ENCODE measurements at regions of chr9 and their contacts with region 1.

Region 1: DNA sequence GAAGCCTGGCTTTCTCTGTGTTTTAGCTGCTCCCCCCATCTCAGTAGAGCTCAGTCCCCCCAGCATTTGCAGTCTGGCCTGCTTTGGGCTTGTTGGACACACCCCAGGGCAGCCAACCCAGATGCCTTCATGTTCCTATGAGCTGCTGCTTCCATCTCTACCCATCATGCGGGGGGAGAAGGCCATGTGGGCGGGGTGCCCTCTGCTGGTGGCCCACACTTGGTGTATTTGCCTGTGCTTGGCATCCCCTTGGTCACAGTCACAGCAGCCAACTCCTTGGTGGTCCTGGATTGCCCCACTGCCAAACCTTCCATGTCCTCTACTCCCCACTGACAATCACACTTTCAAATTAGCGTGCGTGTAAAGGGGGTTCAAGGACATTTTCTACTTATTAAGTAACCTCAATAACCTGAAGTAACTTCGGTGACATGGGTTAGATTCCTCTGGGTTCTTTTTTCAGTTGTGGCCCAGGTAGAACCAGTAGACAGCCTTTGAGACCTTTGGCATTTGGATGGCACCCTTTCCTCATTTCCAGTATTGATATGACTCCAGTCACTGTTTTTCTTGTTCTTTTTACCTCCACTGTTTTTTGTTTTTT is 42.8 kb downstream of the SNX30 start:
- DNase-seq: peak; percentile 92
- ATAC-seq: peak; percentile 99
- H3K4me3 Mint-ChIP-seq: no peak overlapping the region
- H3K27ac Mint-ChIP-seq: no peak overlapping the region
- H3K4me1 Mint-ChIP-seq: peaks cover 5% of the 10 kb centered on the region
- H3K27me3 Mint-ChIP-seq: no peaks in the 10 kb centered on the region

Region 2: DNA sequence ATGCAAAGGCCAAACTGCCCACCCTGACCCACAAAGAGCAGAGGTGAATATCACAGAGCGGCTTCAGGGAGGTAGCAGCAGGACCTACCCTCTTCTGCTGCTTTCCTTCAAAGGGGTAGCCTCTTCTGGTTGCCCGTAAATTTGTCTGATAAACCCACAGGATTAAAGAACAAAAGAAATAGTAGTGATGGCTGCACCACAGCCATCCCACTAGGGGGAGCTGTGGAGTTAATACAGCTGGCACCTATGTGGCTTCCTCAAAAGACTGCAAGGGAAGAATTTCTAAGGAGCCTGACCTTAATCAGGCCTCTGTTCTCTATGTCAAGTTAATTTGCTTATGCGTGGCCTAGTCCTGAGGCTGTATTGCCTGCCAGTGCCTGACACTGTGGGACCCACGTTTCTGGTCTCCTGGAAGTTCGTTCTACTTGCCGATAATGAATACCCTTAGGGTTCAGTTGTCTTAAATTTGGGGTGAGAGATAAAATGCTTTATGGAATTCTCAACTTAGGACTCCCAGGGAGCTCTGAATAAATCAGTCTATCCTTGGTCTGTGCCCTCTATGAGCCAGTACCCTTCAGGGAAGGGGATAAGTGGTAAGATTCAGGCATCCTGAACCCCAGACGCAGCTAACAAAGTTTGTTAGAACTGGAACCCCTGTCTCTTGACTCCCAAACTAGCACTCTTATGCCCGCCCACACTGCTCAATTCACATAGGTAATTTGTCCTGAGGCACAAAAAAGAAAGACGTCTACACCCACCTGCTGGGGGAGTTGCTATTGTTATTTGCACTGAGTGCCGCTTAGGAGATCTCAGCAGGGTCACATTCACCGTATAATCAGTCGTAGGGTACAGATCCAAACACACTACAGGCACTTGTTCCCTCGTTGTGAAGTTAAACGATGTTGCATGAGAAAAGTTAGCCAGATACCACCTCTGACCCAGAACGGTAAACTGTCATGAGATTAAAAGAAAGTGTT is 695.3 kb before region 1 on chr9:
- CTCF ChIA-PET with region 1: no interaction called
- POLR2A ChIA-PET with region 1: no interaction called
- intact Hi-C with region 1: loop called (anchors 10 kb)
- DNase-seq: peak; percentile 82
- ATAC-seq: peak; percentile 90
- H3K4me3 Mint-ChIP-seq: no peak overlapping the region
- H3K27ac Mint-ChIP-seq: no peak overlapping the region
- H3K4me1 Mint-ChIP-seq: peaks cover 13% of the 10 kb centered on the region
- H3K27me3 Mint-ChIP-seq: no peaks in the 10 kb centered on the region

Region 3: DNA sequence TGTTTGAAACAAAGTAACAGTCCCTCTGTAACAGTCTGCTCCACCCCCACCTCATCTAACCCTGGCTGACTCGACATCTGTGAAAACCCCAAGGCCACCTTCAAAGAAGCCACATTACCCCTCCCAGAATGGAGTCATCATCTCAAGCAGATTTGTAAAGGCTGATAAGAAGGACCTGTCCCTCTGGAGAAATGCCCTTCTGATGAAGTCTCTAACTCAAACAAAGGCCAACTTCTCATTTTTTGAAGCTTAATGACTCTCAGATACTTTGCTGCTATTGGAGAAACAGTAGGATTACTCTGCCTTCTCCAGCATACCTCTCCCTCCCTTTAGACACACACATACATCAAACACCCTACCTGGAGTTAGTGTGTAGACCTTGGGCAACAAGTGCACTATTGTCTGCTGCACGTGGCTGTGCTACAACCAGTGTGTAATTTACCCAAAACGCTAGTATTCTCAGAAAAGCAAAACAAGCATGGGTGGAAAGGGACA is 612.9 kb before region 1 on chr9:
- CTCF ChIA-PET with region 1: no interaction called
- POLR2A ChIA-PET with region 1: no interaction called
- intact Hi-C with region 1: no loop called
- DNase-seq: peak; percentile 74
- ATAC-seq: peak; percentile 87
- H3K4me3 Mint-ChIP-seq: peak overlapping the region; percentile 18
- H3K27ac Mint-ChIP-seq: peak overlapping the region; percentile 5
- H3K4me1 Mint-ChIP-seq: peaks cover 30% of the 10 kb centered on the region
- H3K27me3 Mint-ChIP-seq: peaks cover 14% of the 10 kb centered on the region

Region 4: DNA sequence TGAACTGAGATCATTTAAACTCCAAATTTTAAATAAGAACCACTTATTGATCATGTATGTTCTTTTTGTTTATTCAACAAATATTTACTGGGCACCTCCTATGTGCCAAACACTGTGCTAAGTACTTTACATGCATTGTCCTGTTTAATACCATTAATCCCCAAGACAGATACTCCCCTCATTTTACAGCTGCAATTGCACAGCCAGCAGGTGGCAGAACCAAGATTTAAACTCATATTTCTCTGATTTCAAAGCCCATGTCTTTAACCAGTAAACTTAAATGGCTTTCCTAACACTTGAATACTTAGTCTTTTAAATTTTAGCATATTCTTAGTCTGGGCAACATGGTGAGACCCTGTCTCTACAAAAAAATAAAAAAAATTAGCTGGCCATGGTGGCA is 350.1 kb before region 1 on chr9:
- CTCF ChIA-PET with region 1: interaction called, 3 read pairs
- POLR2A ChIA-PET with region 1: no interaction called
- intact Hi-C with region 1: loop called (anchors 5 kb)
- DNase-seq: peak; percentile 33
- ATAC-seq: no peak
- H3K4me3 Mint-ChIP-seq: no peak overlapping the region
- H3K27ac Mint-ChIP-seq: no peak overlapping the region
- H3K4me1 Mint-ChIP-seq: no peaks in the 10 kb centered on the region
- H3K27me3 Mint-ChIP-seq: no peaks in the 10 kb centered on the region

Region 5: GRCh38 chr9:112694706-112695555 is 98.4 kb before region 1 on chr9:
- CTCF ChIA-PET with region 1: interaction called, 11 read pairs
- POLR2A ChIA-PET with region 1: no interaction called
- intact Hi-C with region 1: no loop called
- DNase-seq: no peak
- ATAC-seq: no peak
- H3K4me3 Mint-ChIP-seq: no peak overlapping the region
- H3K27ac Mint-ChIP-seq: no peak overlapping the region
- H3K4me1 Mint-ChIP-seq: peaks cover 16% of the 10 kb centered on the region
- H3K27me3 Mint-ChIP-seq: no peaks in the 10 kb centered on the region

Region 6: DNA sequence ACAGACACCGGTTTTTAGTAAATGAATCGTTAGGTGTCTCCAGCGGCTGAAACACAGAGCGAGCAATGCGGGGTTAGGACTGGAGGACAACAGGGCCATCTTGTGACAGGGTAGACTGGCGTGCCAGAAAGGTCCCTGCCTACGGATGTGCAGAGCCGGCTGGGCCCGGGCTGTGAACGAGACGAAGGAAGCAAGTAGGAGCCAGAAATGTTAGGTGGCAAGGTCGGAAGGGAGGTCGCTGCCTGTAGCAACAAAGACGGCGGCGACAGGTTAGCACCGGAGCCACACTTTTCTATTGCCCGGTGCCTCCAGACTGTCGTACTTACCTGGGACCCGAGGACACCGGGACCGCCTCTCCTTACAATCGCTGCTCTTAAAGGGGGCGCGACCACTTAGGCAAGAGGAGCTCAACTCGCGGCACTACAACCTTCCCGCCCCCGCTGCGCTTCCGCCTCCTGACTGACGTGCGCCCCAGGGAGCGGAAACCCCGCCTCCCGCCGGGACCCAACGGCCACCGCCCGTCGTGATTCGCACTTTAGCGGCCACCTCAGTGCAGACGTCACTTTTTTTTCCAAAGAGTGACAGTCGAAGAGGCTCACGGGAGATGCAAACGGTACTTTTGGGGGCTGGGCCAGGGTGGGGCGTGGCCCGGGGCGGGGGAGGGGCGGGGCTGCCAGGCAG is 75.5 kb before region 1 on chr9 and contains the start of gene INIP:
- CTCF ChIA-PET with region 1: interaction called, 8 read pairs
- POLR2A ChIA-PET with region 1: interaction called, 4 read pairs
- intact Hi-C with region 1: loop called (anchors 1 to 5 kb)
- DNase-seq: peak; percentile 99
- ATAC-seq: peak; percentile 93
- H3K4me3 Mint-ChIP-seq: peak within 1 kb of the TSS; percentile 89
- H3K27ac Mint-ChIP-seq: peak within 1 kb of the TSS; percentile 97
- H3K4me1 Mint-ChIP-seq: peaks cover 35% of the 10 kb centered on the region
- H3K27me3 Mint-ChIP-seq: no peaks in the 10 kb centered on the region
- total RNA-seq, gene INIP: 37.3 to 37.7 TPM

Region 7: GRCh38 chr9:112743216-112743836 is 50.0 kb before region 1 on chr9:
- CTCF ChIA-PET with region 1: interaction called, 3 read pairs
- POLR2A ChIA-PET with region 1: no interaction called
- intact Hi-C with region 1: loop called in 1 of 2 experiments (anchors 10 kb)
- DNase-seq: no peak
- ATAC-seq: no peak
- H3K4me3 Mint-ChIP-seq: no peak overlapping the region
- H3K27ac Mint-ChIP-seq: no peak overlapping the region
- H3K4me1 Mint-ChIP-seq: peaks cover 18% of the 10 kb centered on the region
- H3K27me3 Mint-ChIP-seq: no peaks in the 10 kb centered on the region